Activated naive CD4-positive, alpha-beta T cell treated with anti-CD3 and anti-CD28 coated beads for 36 hours (primary cell): ENCODE measurements at regions of chr9 and their contacts with region 1.

Region 1: DNA sequence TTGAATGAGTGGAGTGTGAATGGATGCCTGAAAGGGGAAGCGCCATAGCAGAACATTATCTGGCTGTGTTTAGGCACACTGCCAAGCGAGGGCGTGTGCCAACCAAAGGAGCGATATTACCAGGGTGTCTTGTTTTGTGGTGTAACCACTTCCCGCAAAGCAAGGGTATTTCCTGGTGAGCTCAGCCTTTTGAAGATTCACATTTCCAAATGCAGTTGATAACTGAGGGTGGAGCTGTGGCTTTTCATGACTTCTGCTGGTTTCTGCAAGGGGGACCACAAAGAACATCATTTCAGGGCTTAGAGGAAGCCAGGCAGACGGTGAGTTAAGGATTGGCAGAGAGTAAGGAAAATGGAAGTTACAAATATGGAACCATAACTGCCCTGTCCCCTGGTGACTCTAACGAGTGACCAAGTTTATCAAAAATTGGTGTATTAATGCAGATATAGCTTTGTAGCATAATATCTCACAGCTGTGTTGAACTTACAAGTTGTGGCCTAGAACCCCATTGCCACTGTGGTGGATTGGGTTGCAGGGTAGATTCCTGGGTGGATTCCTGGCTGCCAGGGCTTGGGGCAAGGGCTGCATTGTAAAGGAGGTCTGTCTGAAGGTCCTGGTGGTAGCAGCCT is 71.4 kb downstream of the RALGPS1 start:
- DNase-seq: peak; percentile 94
- H3K4me3 Mint-ChIP-seq: no peak overlapping the region
- H3K27ac Mint-ChIP-seq: peak overlapping the region; percentile 44
- H3K4me1 Mint-ChIP-seq: peaks cover 40% of the 10 kb centered on the region
- H3K27me3 Mint-ChIP-seq: peaks cover 75% of the 10 kb centered on the region

Region 2: DNA sequence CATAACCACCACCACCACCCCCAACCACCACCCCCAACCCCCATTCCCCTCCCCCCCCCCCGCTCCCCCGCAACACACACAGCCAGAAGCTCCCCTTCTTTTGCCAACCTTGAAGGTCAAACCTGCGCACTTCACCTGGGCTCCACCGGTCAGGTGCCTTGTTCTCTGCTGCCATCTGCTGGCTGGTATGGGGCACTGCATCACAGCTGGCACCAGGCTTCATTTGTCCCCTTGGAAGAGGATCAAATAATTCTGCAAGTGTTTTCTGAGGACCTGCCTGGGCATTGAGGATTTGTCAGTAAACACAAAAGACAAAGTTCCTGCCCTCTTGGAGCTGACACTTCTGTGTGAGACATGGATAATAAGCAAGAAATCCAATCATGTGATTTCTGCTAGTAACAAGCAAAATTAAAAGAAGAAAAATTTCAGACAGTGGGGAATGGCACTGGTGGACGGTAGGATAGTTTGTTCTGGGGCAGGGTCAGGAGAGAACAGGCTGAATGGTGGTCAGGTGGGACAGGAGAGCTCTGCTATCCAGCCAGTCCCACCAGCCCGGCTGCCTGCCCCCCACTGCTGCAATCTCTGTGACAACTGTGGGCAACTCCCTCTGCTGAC is 427.8 kb before region 1 on chr9:
- CTCF ChIA-PET with region 1: no interaction called
- intact Hi-C with region 1: no loop called
- DNase-seq: peak; percentile 79
- H3K4me3 Mint-ChIP-seq: no peak overlapping the region
- H3K27ac Mint-ChIP-seq: no peak overlapping the region
- H3K4me1 Mint-ChIP-seq: no peaks in the 10 kb centered on the region
- H3K27me3 Mint-ChIP-seq: peaks cover 28% of the 10 kb centered on the region

Region 3: GRCh38 chr9:126804696-126805545 is 181.1 kb before region 1 on chr9 and contains the start of gene ZBTB43:
- CTCF ChIA-PET with region 1: interaction called, 3 read pairs
- intact Hi-C with region 1: loop called (anchors 10 kb)
- DNase-seq: peak; percentile 99
- H3K4me3 Mint-ChIP-seq: peak within 1 kb of the TSS; percentile 89
- H3K27ac Mint-ChIP-seq: peak within 1 kb of the TSS; percentile 95
- H3K4me1 Mint-ChIP-seq: peaks cover 30% of the 10 kb centered on the region
- H3K27me3 Mint-ChIP-seq: no peaks in the 10 kb centered on the region
- total RNA-seq, gene ZBTB43: 20.9 to 25.9 TPM

Region 4: GRCh38 chr9:126939821-126940221 is 46.2 kb before region 1 on chr9:
- CTCF ChIA-PET with region 1: interaction called, 3 read pairs
- intact Hi-C with region 1: loop called (anchors 2 kb)
- DNase-seq: no peak
- H3K4me3 Mint-ChIP-seq: no peak overlapping the region
- H3K27ac Mint-ChIP-seq: no peak overlapping the region
- H3K4me1 Mint-ChIP-seq: peaks cover 4% of the 10 kb centered on the region
- H3K27me3 Mint-ChIP-seq: peaks cover 22% of the 10 kb centered on the region

Region 5: GRCh38 chr9:127004946-127005769 is 19.2 kb after region 1 on chr9:
- CTCF ChIA-PET with region 1: interaction called, 12 read pairs
- intact Hi-C with region 1: loop called (anchors 1 kb)
- DNase-seq: peak; percentile 91
- H3K4me3 Mint-ChIP-seq: no peak overlapping the region
- H3K27ac Mint-ChIP-seq: peak overlapping the region; percentile 76
- H3K4me1 Mint-ChIP-seq: peaks cover 21% of the 10 kb centered on the region
- H3K27me3 Mint-ChIP-seq: peaks cover 34% of the 10 kb centered on the region

Region 6: DNA sequence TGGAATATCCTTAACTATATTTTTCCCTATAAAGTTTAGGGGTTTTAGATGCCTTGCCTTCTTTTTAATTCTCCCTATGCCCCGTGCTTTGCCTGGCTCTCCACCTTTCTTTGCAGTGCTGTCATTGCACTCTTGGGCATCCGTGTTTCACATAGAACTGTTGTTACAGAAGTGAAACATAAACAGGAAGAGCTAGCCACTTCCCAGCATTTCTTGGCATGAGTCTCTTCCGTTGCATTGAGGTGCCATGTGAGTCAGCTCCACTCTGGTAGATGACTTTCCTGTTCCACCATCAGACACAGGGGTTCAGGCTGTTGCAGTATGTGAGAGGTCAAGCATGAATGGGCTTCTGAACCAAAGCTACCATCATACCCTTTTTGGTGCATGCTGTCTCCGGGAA is 63.1 kb after region 1 on chr9:
- CTCF ChIA-PET with region 1: no interaction called
- intact Hi-C with region 1: loop called (anchors 1 kb)
- DNase-seq: peak; percentile 64
- H3K4me3 Mint-ChIP-seq: no peak overlapping the region
- H3K27ac Mint-ChIP-seq: no peak overlapping the region
- H3K4me1 Mint-ChIP-seq: peaks cover 16% of the 10 kb centered on the region
- H3K27me3 Mint-ChIP-seq: no peaks in the 10 kb centered on the region

Region 7: DNA sequence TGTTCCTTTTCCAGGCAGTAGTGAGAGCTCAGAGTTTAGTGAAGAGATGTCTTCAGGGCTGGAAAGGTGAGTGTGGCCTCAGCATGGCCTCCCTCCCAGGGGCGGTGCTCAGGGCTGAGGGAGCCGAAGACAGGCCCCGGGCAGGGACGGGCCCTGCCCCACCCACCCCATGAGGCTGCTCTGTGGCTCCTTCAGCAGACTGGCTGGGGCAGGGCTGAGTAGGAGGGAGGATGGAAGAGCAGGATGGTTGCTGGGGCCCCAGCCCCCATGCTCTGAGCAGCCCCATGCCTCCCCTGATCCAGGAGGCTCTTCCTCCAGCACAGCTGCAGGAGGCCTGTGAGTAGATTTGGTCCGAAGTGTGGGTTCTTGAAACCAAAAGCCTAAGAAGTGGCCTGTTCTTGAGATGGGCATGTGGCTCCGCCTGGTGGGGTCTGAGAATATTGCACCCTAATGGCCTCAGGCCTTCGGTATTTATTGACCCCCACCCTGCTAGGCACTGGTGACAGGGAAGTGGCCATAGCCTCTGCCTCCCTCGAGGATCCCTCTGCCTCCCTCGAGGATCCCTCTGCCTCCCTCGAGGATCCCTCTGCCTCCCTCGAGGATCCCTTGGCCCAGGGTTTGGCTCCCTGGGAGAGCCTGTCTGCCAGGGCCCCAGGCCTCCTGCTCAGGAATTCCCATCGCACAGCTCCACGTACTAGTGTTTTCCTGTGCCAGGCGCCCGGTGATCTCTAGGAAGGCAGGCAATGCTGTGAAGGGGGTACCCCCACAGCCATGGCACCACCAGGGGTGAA is 213.2 kb after region 1 on chr9:
- CTCF ChIA-PET with region 1: interaction called, 7 read pairs
- intact Hi-C with region 1: loop called (anchors 1 kb)
- DNase-seq: peak; percentile 87
- H3K4me3 Mint-ChIP-seq: no peak overlapping the region
- H3K27ac Mint-ChIP-seq: no peak overlapping the region
- H3K4me1 Mint-ChIP-seq: peaks cover 3% of the 10 kb centered on the region
- H3K27me3 Mint-ChIP-seq: peaks cover 7% of the 10 kb centered on the region

Region 8: DNA sequence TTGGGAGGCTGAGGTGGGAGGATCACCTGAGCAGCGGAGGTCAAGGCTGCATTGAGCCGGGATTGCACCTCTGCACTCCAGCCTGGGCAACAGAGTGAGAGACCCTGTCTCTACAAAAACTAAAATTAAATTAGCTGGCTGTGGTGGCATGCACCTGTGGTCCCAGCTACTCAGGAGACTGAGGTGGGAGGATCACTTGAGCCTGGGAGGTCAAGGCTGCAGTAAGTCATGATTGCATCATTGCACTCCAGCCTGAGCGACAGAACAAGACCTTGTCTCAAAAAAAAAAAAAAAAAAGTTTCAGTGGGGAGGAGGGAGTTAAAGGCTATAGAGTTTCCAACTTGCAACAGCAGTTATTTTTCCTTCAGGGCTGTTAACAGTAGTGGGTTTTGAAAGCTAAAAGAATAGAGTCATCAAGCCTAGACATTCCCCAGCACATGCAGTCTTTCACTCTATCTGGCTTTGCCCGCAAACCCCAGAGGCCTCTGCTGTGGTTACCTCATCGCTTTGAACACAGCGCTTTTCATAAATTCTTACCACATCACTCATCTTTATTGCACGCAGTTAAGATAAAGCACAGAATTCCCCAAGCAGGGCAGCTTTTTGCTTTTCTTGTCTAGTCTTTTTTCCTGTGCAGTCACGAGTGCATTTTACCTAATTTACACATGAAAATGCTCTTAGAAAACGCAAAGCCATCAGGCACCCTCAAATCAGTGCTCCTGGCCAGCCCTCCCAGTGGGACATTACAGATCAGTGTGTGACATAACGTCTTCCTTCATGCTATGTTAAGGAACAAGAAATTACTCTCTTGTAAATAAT is 402.3 kb after region 1 on chr9:
- CTCF ChIA-PET with region 1: no interaction called
- intact Hi-C with region 1: loop called (anchors 1 kb)
- DNase-seq: peak; percentile 97
- H3K4me3 Mint-ChIP-seq: peak overlapping the region; percentile 31
- H3K27ac Mint-ChIP-seq: peak overlapping the region; percentile 84
- H3K4me1 Mint-ChIP-seq: peaks cover 33% of the 10 kb centered on the region
- H3K27me3 Mint-ChIP-seq: peaks cover 73% of the 10 kb centered on the region